ENCODE measurements at regions of chr7 and their contacts with region 1.

Region 1: GRCh38 chr7:98821348-98821747 is 48.5 kb downstream of the TMEM130 start:
- DNase-seq: no peak
- ATAC-seq: no peak
- H3K4me3 Mint-ChIP-seq: no peak overlapping the region
- H3K27ac Mint-ChIP-seq: no peak overlapping the region
- H3K4me1 Mint-ChIP-seq: no peaks in the 10 kb centered on the region
- H3K27me3 Mint-ChIP-seq: peaks cover 6% of the 10 kb centered on the region

Region 2: DNA sequence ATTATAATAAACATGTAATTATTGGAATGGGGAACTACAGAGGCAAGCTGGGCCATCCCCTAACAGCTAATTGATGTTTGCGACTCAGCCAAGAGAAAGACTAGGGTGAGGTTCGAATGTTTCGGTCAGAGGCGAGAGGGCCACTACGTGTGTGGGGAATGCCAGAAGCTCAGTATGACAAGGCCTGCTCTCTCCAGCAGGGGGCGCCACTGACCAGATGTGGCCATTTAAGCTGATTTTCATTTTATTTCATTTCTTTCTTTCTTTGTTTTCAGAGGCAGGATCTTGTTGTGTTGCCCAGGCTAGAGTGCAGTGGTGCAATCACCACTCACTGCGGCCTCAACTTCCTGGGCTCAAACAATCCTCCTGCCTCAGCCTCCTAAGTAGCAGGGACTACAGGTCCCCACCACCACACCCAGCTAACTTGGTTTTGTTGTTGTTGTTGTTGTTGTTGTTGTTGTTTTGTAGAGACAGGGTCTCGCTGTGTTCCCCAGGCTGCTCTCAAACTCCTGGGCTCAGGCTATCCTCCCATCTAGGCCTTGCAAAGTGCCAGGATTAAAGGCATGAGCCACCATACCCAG is 10.4 kb after region 1 on chr7:
- CTCF ChIA-PET with region 1: interaction called, 10 read pairs
- POLR2A ChIA-PET with region 1: no interaction called
- intact Hi-C with region 1: no loop called
- DNase-seq: peak; percentile 76
- ATAC-seq: no peak
- H3K4me3 Mint-ChIP-seq: no peak overlapping the region
- H3K27ac Mint-ChIP-seq: no peak overlapping the region
- H3K4me1 Mint-ChIP-seq: no peaks in the 10 kb centered on the region
- H3K27me3 Mint-ChIP-seq: peaks cover 5% of the 10 kb centered on the region

Measured in activated CD4-positive, alpha-beta T cell treated with anti-CD3 and anti-CD28 coated beads for 36 hours (primary cell).